HEK293 (cell line): ENCODE measurements at regions of chr13 and their contacts with region 1.

Region 1: GRCh38 chr13:52652196-52652979 is at the start of gene SUGT1:
- H3K4me3 ChIP-seq: peak within 1 kb of the TSS; percentile 86
- H3K27ac ChIP-seq: peak within 1 kb of the TSS; percentile 87
- H3K4me1 ChIP-seq: no peaks in the 10 kb centered on the region
- CTCF ChIP-seq: peak; percentile 83; the same call in 1 of the 2 replicates

Region 2: DNA sequence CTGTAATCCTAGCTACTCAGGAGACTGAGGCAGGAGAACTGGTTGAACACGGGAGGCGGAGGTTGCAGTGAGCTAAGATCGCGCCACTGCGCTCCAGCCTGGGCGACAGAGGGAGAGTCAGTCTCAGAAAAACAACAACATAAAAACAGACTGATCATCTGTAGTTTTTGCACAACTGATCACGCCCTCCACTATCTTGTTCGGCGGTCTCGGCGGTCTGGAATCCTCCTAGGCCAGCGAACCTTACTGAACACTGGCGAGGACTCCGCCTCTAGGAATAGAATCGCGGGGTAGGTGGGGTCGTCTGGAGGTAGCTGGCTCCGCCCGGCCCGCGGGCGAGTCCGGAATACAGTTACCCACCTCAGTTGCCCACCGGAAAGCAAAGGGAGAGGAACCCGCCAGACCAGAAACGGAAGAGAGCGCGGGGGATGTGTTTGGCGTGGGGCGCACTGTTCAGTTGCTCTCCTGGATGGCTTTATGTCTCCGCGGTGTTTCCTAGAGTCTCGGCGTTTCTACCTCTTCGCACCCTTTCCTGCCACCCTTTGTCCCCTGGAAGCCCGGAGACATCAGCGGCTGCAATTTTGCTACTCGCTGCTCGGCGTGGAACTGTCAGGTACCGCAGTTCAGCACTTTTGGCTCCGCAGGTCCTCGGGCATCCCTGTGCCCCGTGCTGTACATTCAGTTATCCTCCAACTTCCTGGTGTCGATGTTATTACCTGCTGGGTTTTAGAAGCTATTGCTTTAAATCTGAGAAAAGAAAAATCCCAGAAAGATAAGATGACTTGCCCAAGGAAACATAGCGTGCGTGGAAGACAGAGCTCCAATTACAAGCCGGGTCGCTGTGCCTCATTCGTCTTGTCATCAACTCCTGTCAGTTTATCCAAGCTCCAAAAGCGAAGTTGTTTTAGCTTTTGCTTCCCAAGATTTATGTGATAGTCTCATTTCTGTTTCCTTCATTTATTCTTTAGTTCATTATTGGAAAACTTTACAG is 35.0 kb before region 1 on chr13:
- CTCF ChIA-PET with region 1: interaction called, 6 read pairs
- POLR2A ChIA-PET with region 1: interaction called, 35 read pairs
- H3K4me3 ChIP-seq: peak overlapping the region; percentile 83
- H3K27ac ChIP-seq: peak overlapping the region; percentile 21; the same call in 1 of the 2 replicates
- H3K4me1 ChIP-seq: 0 out of 2 replicates have a peak, but pooled peaks cover 2% of the 10 kb centered on the region
- CTCF ChIP-seq: no peak

Region 3: GRCh38 chr13:52638666-52639328 is 13.6 kb before region 1 on chr13:
- CTCF ChIA-PET with region 1: no interaction called
- POLR2A ChIA-PET with region 1: interaction called, 14 read pairs
- H3K4me3 ChIP-seq: no peak overlapping the region
- H3K27ac ChIP-seq: no peak overlapping the region
- H3K4me1 ChIP-seq: no peaks in the 10 kb centered on the region
- CTCF ChIP-seq: no peak

Region 4: GRCh38 chr13:52665325-52665724 is 12.9 kb after region 1 on chr13:
- CTCF ChIA-PET with region 1: interaction called, 24 read pairs
- POLR2A ChIA-PET with region 1: interaction called, 9 read pairs
- H3K4me3 ChIP-seq: no peak overlapping the region
- H3K27ac ChIP-seq: no peak overlapping the region
- H3K4me1 ChIP-seq: no peaks in the 10 kb centered on the region
- CTCF ChIP-seq: no peak

Region 5: GRCh38 chr13:52760077-52760476 is 107.7 kb after region 1 on chr13:
- CTCF ChIA-PET with region 1: no interaction called
- POLR2A ChIA-PET with region 1: no interaction called
- H3K4me3 ChIP-seq: no peak overlapping the region
- H3K27ac ChIP-seq: no peak overlapping the region
- H3K4me1 ChIP-seq: no peaks in the 10 kb centered on the region
- CTCF ChIP-seq: no peak

Region 6: GRCh38 chr13:52809310-52809769 is 157.0 kb after region 1 on chr13:
- CTCF ChIA-PET with region 1: interaction called, 18 read pairs
- POLR2A ChIA-PET with region 1: interaction called, 6 read pairs
- H3K4me3 ChIP-seq: no peak overlapping the region
- H3K27ac ChIP-seq: no peak overlapping the region
- H3K4me1 ChIP-seq: peaks cover 9% of the 10 kb centered on the region
- CTCF ChIP-seq: peak; percentile 26; the same call in 1 of the 2 replicates